ENCODE measurements at regions of chr12 and their contacts with region 1.

Region 1: GRCh38 chr12:49529414-49529813 is 9.4 kb upstream of the KCNH3 start:
- DNase-seq: no peak
- ATAC-seq: no peak
- H3K4me3 Mint-ChIP-seq: no peak overlapping the region
- H3K27ac Mint-ChIP-seq: no peak overlapping the region
- H3K4me1 Mint-ChIP-seq: peaks cover 3% of the 10 kb centered on the region
- H3K27me3 Mint-ChIP-seq: no peaks in the 10 kb centered on the region
- CTCF ChIP-seq: no peak

Region 2: GRCh38 chr12:49547090-49547690 is 17.8 kb after region 1 on chr12:
- CTCF ChIA-PET with region 1: no interaction called
- POLR2A ChIA-PET with region 1: no interaction called
- intact Hi-C with region 1: no loop called
- DNase-seq: no peak
- ATAC-seq: no peak
- H3K4me3 Mint-ChIP-seq: no peak overlapping the region
- H3K27ac Mint-ChIP-seq: no peak overlapping the region
- H3K4me1 Mint-ChIP-seq: peaks cover 10% of the 10 kb centered on the region
- H3K27me3 Mint-ChIP-seq: peaks cover 38% of the 10 kb centered on the region
- CTCF ChIP-seq: no peak

Region 3: GRCh38 chr12:49604856-49605255 is 75.4 kb after region 1 on chr12:
- CTCF ChIA-PET with region 1: no interaction called
- POLR2A ChIA-PET with region 1: interaction called, 19 read pairs
- intact Hi-C with region 1: no loop called
- DNase-seq: no peak
- ATAC-seq: no peak
- H3K4me3 Mint-ChIP-seq: no peak overlapping the region
- H3K27ac Mint-ChIP-seq: no peak overlapping the region
- H3K4me1 Mint-ChIP-seq: no peaks in the 10 kb centered on the region
- H3K27me3 Mint-ChIP-seq: no peaks in the 10 kb centered on the region
- CTCF ChIP-seq: no peak